Vagina (tissue), 2 donors: ENCODE measurements at regions of chr6 and their contacts with region 1.

Region 1: DNA sequence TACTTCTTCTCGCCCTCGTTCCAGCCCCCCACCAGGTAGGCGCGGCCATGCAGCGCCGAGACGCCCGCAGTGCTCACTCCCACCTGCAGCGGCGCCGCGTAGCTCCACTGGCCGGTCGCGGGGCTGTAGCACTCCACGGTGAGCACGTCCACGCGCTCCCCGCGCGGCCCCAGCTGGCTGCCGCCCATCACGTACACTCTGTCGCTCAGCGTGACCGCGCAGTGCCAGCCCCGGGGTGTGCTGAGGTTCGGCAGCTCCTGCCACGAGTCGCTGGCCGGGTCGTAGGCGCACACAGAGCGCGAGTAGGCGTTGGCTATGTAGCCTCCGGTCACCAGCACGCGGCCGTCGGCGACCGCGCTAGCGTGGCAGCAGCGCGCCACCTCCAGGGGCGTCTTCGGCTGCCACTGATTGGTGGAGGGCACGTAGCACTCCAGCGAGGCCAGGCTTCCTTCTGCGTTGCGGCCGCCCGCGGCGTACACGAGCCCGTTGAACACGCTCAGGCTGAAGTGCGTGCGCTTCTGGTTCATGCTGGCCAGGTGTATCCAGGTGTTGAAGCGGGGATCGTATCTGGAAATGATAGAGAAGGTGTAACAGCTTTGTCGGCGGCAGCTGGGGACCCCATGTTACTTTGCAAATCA is 13.7 kb downstream of the KLHL31 start:
- DNase-seq: no peak
- H3K4me3 ChIP-seq: peak overlapping the region; percentile 51 to 60
- H3K27ac ChIP-seq: peak overlapping the region; percentile 31
- H3K4me1 ChIP-seq: peaks cover 14% of the 10 kb centered on the region
- H3K27me3 ChIP-seq: no peaks in the 10 kb centered on the region
- CTCF ChIP-seq: peak in 1 of 3 experiments; percentile 21
- POLR2A ChIP-seq: no peak

Region 2: DNA sequence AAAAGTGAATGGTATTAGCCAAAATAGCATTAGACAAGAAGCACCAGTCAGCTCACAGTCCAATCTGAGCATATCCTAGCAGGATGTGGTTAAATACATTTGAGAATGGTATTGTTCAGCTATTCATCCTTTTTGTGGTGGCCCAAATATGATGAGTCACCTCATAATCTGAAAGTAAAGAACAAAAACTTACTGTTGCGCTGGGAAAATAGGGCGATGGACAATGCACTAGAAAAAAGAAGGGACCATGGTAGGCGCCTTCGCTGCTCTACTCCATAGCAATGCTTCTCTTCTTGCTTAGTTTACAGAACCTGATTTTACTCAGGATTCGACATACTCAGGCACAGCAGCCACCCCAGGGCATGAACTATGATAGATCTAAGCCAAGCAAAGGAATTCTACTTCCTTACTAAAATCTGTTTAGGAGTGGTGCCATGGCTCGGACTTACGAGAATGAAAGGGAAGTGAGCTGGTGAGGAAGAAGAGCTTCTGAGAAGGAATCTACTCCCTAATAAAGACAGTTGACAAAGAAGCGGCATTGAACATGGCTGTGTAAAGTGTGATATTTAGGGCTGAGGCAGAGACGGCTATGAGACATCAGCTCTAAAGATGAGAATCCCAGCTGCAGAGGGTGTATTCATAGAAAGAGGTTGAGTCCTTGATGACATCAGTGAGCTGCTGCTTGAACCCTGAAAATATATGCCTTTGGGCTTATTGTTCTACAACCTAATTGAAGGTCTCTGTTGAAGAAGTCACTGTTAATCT is 603.3 kb before region 1 on chr6:
- intact Hi-C with region 1: no loop called
- DNase-seq: no peak
- H3K4me3 ChIP-seq: no peak overlapping the region
- H3K27ac ChIP-seq: no peak overlapping the region
- H3K4me1 ChIP-seq: peaks cover 9% of the 10 kb centered on the region
- H3K27me3 ChIP-seq: no peaks in the 10 kb centered on the region
- CTCF ChIP-seq: no peak
- POLR2A ChIP-seq: no peak

Region 3: GRCh38 chr6:53492860-53493634 is 158.8 kb before region 1 on chr6:
- intact Hi-C with region 1: loop called (anchors 10 kb)
- DNase-seq: no peak
- H3K4me3 ChIP-seq: no peak overlapping the region
- H3K27ac ChIP-seq: no peak overlapping the region
- H3K4me1 ChIP-seq: peaks cover 9% of the 10 kb centered on the region
- H3K27me3 ChIP-seq: no peaks in the 10 kb centered on the region
- CTCF ChIP-seq: peak; percentile 59 to 69 (median 66)
- POLR2A ChIP-seq: no peak

Region 4: GRCh38 chr6:53544470-53545308 is 107.2 kb before region 1 on chr6 and contains the start of gene GCLC:
- intact Hi-C with region 1: loop called (anchors 10 kb)
- DNase-seq: peak in 1 of 2 donors; percentile 94
- H3K4me3 ChIP-seq: peak within 1 kb of the TSS; percentile 71 to 93
- H3K27ac ChIP-seq: peak within 1 kb of the TSS; percentile 92
- H3K4me1 ChIP-seq: peaks cover 55% of the 10 kb centered on the region
- H3K27me3 ChIP-seq: no peaks in the 10 kb centered on the region
- CTCF ChIP-seq: peak; percentile 4 to 77 (median 34)
- POLR2A ChIP-seq: peak; percentile 75 to 91
- total RNA-seq, gene GCLC: 63.1 TPM